Spleen (tissue), 13 donors: ENCODE measurements at regions of chr7 and their contacts with region 1.

Region 1: GRCh38 chr7:39580149-39580874 is 14.1 kb downstream of the YAE1 start:
- DNase-seq: peak; percentile 83
- H3K4me3 ChIP-seq: no peak overlapping the region
- H3K27ac ChIP-seq: no peak overlapping the region
- H3K4me1 ChIP-seq: no peaks in the 10 kb centered on the region
- H3K27me3 ChIP-seq: no peaks in the 10 kb centered on the region
- CTCF ChIP-seq: peak; percentile 77 to 92 (median 81)
- POLR2A ChIP-seq: no peak

Region 2: DNA sequence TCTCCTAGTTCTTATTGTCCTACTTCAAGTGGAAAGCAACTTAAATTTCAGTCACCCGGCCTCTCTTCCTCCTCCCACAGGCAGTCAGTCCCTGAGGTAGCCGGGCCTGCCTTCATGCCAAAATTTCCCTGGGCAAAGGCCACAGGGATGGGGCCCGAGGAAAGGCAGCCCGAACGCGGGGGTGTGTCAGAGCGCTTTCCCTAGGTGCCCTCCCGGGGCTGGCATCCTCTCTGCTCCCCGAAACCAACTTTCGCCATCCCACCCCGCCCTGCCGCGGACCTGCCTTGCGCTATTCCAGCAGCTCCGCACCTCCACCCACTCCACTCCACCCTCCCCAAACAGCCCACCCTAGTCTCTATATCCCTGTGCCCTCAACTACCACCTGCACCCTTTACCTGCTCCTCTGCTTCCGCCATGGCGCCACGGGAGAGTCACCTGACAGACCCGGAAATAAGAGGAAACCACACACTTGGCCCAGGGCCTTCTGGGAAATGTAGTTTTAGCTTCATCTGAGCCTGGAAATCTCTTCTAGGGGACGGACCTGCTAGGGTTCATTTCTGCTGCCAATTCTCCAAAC is 671.5 kb before region 1 on chr7 and contains the start of gene VPS41:
- intact Hi-C with region 1: no loop called
- DNase-seq: peak; percentile 93
- H3K4me3 ChIP-seq: peak within 1 kb of the TSS; percentile 82 to 95 (median 89)
- H3K27ac ChIP-seq: peak within 1 kb of the TSS; percentile 23 to 87 (median 72)
- H3K4me1 ChIP-seq: peaks cover 17 to 48% (median 30%) of the 10 kb centered on the region in 6 donors
- H3K27me3 ChIP-seq: no peaks in the 10 kb centered on the region
- CTCF ChIP-seq: peak in 1 of 11 experiments; percentile 15
- POLR2A ChIP-seq: no peak
- total RNA-seq, gene VPS41: 44.3 to 97.4 (median 72.1) TPM

Region 3: GRCh38 chr7:39321909-39322498 is 258.3 kb before region 1 on chr7:
- intact Hi-C with region 1: no loop called
- DNase-seq: no peak
- H3K4me3 ChIP-seq: no peak overlapping the region
- H3K27ac ChIP-seq: no peak overlapping the region
- H3K4me1 ChIP-seq: no peaks in the 10 kb centered on the region
- H3K27me3 ChIP-seq: no peaks in the 10 kb centered on the region
- CTCF ChIP-seq: no peak
- POLR2A ChIP-seq: no peak

Region 4: DNA sequence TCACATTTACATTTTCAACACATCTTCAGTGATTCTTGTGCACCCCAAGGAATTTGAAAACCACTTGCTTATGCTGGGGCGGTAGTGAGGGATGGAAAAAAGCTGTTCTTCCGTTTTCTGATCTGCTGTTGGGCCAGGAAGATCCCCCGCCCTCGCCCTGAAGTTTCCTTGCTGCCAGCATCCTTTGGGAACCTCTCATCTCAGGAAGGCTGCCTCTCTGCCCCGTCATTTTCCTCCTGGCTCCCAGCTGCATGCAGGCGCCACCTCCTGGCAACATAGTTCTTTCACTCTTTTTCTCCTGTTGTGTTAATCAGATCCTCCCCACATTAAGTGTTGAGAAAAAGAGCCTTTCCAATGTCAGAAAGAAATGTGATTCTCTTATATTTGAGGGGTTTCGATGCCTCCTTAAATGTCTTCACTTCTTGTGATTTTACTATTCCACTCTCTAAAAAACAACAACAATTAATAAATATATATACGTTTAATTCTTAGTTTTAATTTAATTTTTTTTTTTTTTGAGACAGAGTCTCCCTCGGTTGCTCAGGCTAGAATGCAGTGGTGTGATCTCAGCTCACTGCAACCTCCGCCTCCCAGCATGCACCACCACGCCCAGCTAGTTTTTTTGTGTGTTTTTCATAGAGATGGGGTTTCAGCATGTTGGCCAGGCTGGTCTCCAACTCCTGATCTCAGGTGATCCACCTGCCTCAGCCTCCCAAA is 165.9 kb after region 1 on chr7:
- intact Hi-C with region 1: loop called (anchors 5 kb)
- DNase-seq: peak; percentile 82
- H3K4me3 ChIP-seq: no peak overlapping the region
- H3K27ac ChIP-seq: no peak overlapping the region
- H3K4me1 ChIP-seq: peaks cover 0 to 9% (median 2%) of the 10 kb centered on the region in 6 donors
- H3K27me3 ChIP-seq: no peaks in the 10 kb centered on the region
- CTCF ChIP-seq: peak; percentile 42 to 83 (median 60)
- POLR2A ChIP-seq: no peak